CD4-positive, alpha-beta memory T cell (primary cell): ENCODE measurements at regions of chr1 and their contacts with region 1.

Region 1: DNA sequence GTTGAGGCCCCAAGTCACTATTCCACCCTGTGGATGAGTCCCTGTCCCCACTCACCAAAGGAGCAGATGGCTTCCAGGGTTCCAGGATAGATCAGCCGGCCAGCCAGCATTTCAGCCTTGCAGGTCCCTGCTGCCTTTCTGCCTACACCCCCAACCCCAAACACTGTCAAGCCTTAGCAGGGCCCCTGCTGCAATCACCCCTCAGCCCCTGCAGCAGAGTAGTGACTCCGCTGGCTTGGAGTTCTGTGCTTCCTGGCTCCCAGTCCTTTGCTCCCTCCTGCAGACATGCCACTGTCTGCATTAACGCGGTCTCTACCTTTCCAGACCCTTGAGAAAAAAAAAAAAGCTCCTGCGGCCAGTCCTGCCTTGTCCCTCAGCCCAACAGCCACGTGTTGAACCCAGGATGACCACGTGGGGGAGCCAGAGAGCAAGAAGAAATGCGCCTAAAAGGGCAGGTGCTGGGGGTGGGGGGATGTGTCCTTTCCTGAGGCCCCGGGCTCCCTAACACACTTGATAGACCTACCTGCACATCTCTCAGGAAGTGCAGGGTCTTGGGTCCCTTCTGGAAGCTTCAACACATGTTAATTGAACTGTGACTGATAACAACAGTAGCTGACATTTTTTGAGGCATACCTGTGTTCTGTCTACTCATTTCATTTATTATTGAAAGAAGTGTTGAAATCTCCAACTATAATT is 37.4 kb downstream of the RASSF5 start:
- DNase-seq: peak; percentile 66 to 83 (median 76)
- H3K4me3 ChIP-seq: no peak overlapping the region
- H3K4me3 Mint-ChIP-seq: peak overlapping the region in 2 of 8 donors; percentile 6 to 52
- H3K27ac ChIP-seq: no peak overlapping the region
- H3K27ac Mint-ChIP-seq: peak overlapping the region in 5 of 7 donors; percentile 27 to 77 (median 60)
- H3K4me1 ChIP-seq: peaks cover 10% of the 10 kb centered on the region
- H3K4me1 Mint-ChIP-seq: peaks cover 5 to 15% (median 11%) of the 10 kb centered on the region in 4 donors
- H3K27me3 ChIP-seq: no peaks in the 10 kb centered on the region
- H3K27me3 Mint-ChIP-seq: no peaks in the 10 kb centered on the region

Region 2: DNA sequence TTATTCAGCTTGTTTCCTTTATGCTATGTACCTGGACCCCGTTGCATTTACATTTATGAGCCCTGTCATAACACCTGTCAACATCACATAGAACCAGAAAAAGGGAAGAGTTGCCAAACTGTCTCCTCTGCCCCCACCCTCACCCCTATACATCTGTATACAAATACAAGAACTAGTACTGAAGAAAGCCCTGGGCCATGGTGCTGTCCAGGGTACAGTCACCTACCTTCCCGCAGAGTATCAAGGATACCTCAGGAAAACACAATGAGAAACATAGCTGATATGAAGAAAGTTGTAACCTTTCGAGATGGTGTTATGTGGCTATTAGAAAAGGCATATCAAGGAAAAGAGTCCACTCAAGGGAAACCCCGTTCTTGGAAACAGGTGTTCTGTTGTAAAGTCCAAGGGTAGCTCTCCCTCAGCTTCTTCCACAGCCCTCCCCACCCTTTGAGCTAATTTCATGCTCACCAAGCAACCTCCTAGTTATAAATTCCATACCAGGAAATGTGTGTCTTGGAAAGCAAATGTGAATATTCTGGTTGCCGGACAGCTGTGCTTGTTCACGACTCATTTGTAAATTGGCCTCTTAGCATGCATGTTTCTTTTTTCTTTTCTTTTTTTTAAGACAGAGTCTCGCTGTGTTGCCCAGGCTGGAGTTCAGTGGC is 410.8 kb before region 1 on chr1:
- CTCF ChIA-PET with region 1: no interaction called
- POLR2A ChIA-PET with region 1: no interaction called
- intact Hi-C with region 1: no loop called
- DNase-seq: no peak
- H3K4me3 ChIP-seq: no peak overlapping the region
- H3K4me3 Mint-ChIP-seq: no peak overlapping the region
- H3K27ac ChIP-seq: no peak overlapping the region
- H3K27ac Mint-ChIP-seq: no peak overlapping the region
- H3K4me1 ChIP-seq: no peaks in the 10 kb centered on the region
- H3K4me1 Mint-ChIP-seq: no peaks in the 10 kb centered on the region
- H3K27me3 ChIP-seq: peaks cover under 1% of the 10 kb centered on the region
- H3K27me3 Mint-ChIP-seq: peaks cover 14 to 22% of the 10 kb centered on the region in 2 donors

Region 3: GRCh38 chr1:206469933-206470691 is 74.6 kb before region 1 on chr1 and contains the start of gene IKBKE:
- CTCF ChIA-PET with region 1: interaction called, 17 read pairs
- POLR2A ChIA-PET with region 1: interaction called, 4 read pairs
- intact Hi-C with region 1: no loop called
- DNase-seq: peak; percentile 44 to 69 (median 47)
- H3K4me3 ChIP-seq: peak within 1 kb of the TSS; percentile 99
- H3K4me3 Mint-ChIP-seq: peak within 1 kb of the TSS; percentile 84 to 97 (median 93)
- H3K27ac ChIP-seq: peak within 1 kb of the TSS; percentile 80
- H3K27ac Mint-ChIP-seq: peak within 1 kb of the TSS; percentile 64 to 95 (median 92)
- H3K4me1 ChIP-seq: peaks cover 86% of the 10 kb centered on the region
- H3K4me1 Mint-ChIP-seq: peaks cover 54 to 91% (median 79%) of the 10 kb centered on the region in 4 donors
- H3K27me3 ChIP-seq: no peaks in the 10 kb centered on the region
- H3K27me3 Mint-ChIP-seq: no peaks in the 10 kb centered on the region
- total RNA-seq, gene IKBKE: 81.8 to 92.3 TPM

Region 4: DNA sequence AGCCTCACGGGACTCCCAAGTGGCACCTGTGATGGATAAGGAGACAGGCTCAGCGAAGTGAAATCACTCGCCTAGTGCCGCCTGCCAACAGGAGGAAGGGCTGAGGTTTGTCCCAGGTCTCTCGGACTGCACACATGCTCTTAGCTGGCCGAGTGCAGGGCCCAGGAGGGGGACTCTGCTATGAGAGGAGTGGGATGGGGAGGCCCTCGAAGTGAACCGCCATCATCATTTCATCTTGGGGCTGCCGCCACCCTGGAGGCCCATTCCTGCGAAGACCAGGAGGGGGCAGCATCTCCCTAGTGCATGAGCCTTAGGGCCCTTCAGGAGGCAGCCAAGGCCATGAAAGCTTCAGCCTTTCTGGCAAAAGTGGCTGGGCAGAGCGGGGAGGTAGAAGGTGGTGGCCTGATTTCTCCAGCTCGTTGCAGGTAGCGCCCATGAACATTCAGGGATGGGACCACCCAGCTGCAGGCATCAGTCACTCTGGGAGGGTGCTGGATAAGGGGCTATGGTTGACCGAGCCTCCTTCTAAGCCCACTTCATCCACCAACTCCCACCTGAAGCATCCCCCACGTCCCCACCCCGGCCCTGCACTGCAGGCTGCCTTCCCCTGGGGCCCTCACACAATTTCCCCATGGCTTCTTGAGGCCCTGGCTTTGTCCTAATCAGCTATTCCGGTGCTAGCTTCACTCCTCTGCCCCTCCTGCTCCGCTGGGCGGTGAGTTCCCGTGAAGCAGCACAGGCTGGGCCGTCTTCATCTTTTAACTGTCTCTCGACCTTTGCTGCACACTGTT is 54.5 kb before region 1 on chr1:
- CTCF ChIA-PET with region 1: interaction called, 21 read pairs
- POLR2A ChIA-PET with region 1: no interaction called
- intact Hi-C with region 1: no loop called
- DNase-seq: peak; percentile 46 to 62 (median 57)
- H3K4me3 ChIP-seq: no peak overlapping the region
- H3K4me3 Mint-ChIP-seq: no peak overlapping the region
- H3K27ac ChIP-seq: no peak overlapping the region
- H3K27ac Mint-ChIP-seq: peak overlapping the region in 4 of 7 donors; percentile 17 to 78 (median 56)
- H3K4me1 ChIP-seq: peaks cover under 1% of the 10 kb centered on the region
- H3K4me1 Mint-ChIP-seq: peaks cover 0 to 5% (median 0%) of the 10 kb centered on the region in 4 donors
- H3K27me3 ChIP-seq: no peaks in the 10 kb centered on the region
- H3K27me3 Mint-ChIP-seq: no peaks in the 10 kb centered on the region

Region 5: GRCh38 chr1:206556750-206557635 is 12.3 kb after region 1 on chr1:
- CTCF ChIA-PET with region 1: interaction called, 207 read pairs
- POLR2A ChIA-PET with region 1: interaction called, 19 read pairs
- intact Hi-C with region 1: loop called (anchors 1 kb)
- DNase-seq: peak; percentile 87 to 93 (median 90)
- H3K4me3 ChIP-seq: peak overlapping the region; percentile 95 to 96
- H3K4me3 Mint-ChIP-seq: peak overlapping the region; percentile 90 to 99 (median 98)
- H3K27ac ChIP-seq: peak overlapping the region; percentile 77
- H3K27ac Mint-ChIP-seq: peak overlapping the region; percentile 93 to 98 (median 96)
- H3K4me1 ChIP-seq: peaks cover 76% of the 10 kb centered on the region
- H3K4me1 Mint-ChIP-seq: peaks cover 49 to 93% (median 63%) of the 10 kb centered on the region in 4 donors
- H3K27me3 ChIP-seq: no peaks in the 10 kb centered on the region
- H3K27me3 Mint-ChIP-seq: no peaks in the 10 kb centered on the region

Region 6: DNA sequence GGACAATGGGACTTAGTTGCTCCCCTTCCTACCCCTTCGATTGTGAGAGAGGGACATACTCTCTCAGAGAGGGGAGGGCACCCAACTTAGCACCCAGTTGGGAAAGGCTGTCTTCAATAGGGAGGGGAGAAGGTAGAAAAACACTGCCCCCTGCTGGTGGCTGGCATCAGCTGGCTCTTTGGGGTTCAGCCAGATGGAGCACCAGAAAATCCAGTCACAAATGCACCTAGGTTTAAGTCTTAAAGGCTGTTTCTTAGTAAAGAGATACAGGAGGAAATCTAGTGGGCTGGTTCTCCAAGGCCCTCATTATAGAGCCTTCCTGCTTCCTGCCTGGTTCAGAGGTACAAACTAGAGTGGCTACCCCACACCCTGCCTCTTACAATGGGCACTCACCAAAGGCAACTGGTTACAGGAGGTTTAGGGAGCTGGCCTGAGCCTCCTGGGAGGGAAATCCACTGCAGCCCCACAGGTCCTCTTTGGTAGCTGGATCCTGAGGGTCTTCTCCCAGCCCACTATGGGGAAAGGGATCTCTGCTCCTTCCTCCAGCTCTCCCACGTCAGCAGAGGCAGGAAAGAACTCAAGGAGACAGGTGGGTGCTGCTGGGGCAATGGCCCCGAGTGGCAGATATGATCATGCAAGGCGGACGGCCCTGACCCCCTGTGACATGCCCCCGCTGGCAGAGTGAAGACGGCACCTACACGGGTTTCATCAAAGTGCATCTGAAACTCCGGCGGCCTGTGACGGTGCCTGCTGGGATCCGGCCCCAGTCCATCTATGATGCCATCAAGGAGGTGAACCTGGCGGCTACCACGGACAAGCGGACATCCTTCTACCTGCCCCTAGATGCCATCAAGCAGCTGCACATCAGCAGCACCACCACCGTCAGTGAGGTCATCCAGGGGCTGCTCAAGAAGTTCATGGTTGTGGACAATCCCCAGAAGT is 39.3 kb after region 1 on chr1:
- CTCF ChIA-PET with region 1: interaction called, 550 read pairs
- POLR2A ChIA-PET with region 1: interaction called, 786 read pairs
- intact Hi-C with region 1: loop called (anchors 1 kb)
- DNase-seq: peak; percentile 78 to 86 (median 82)
- H3K4me3 ChIP-seq: no peak overlapping the region
- H3K4me3 Mint-ChIP-seq: peak overlapping the region; percentile 71 to 92 (median 84)
- H3K27ac ChIP-seq: peak overlapping the region; percentile 89
- H3K27ac Mint-ChIP-seq: peak overlapping the region; percentile 93 to 99 (median 97)
- H3K4me1 ChIP-seq: peaks cover 68% of the 10 kb centered on the region
- H3K4me1 Mint-ChIP-seq: peaks cover 52 to 78% (median 59%) of the 10 kb centered on the region in 4 donors
- H3K27me3 ChIP-seq: no peaks in the 10 kb centered on the region
- H3K27me3 Mint-ChIP-seq: no peaks in the 10 kb centered on the region

Region 7: GRCh38 chr1:206612129-206612876 is 67.6 kb after region 1 on chr1 and contains the start of gene EIF2D:
- CTCF ChIA-PET with region 1: interaction called, 16 read pairs
- POLR2A ChIA-PET with region 1: interaction called, 5 read pairs
- intact Hi-C with region 1: no loop called
- DNase-seq: peak; percentile 90 to 96 (median 92)
- H3K4me3 ChIP-seq: peak within 1 kb of the TSS; percentile 62 to 77
- H3K4me3 Mint-ChIP-seq: peak within 1 kb of the TSS; percentile 91 to 95 (median 93)
- H3K27ac ChIP-seq: peak within 1 kb of the TSS; percentile 80
- H3K27ac Mint-ChIP-seq: peak within 1 kb of the TSS; percentile 87 to 98 (median 96)
- H3K4me1 ChIP-seq: peaks cover 12% of the 10 kb centered on the region
- H3K4me1 Mint-ChIP-seq: peaks cover 12 to 34% (median 21%) of the 10 kb centered on the region in 4 donors
- H3K27me3 ChIP-seq: no peaks in the 10 kb centered on the region
- H3K27me3 Mint-ChIP-seq: no peaks in the 10 kb centered on the region
- total RNA-seq, gene EIF2D: 53.5 to 54.5 TPM